Right ventricle myocardium inferior (tissue), 1 donor: ENCODE measurements at regions of chr5 and their contacts with region 1.

Region 1: DNA sequence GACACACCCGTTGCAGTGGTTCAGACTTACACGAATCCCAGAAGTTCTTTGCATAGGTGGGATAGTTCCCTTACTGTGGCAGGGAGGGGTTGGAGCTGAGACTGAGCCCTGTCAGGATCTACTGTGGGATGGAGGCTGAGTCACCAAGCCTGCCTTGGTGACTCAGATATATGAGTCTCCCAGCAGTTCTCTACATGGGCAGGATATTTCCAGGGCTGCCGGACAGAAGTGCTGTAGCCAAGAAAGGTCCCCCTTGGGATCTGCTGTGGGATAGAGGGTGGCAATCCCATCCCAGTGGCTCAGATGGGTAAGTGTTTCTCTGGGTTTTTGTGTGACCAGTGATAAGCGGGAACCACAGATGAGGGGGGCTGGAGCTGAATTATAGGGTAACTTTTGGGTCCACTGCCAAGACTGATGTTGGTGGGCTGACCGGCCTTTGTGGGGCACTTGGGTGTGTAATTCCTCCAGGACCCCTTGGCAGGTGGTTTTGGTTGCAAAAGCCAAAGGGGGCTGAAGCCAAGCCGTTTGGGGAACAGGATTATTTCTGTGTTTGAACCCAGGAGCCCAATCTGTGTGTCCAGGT is 18.7 kb downstream of the XRCC4 start:
- DNase-seq: no peak
- ATAC-seq: no peak

Region 2: GRCh38 chr5:82641331-82642003 is 454.6 kb before region 1 on chr5:
- intact Hi-C with region 1: no loop called
- DNase-seq: no peak
- ATAC-seq: peak; percentile 91

Region 3: GRCh38 chr5:83035373-83036101 is 60.5 kb before region 1 on chr5:
- intact Hi-C with region 1: loop called (anchors 5 kb)
- DNase-seq: peak; percentile 68
- ATAC-seq: peak; percentile 97

Region 4: GRCh38 chr5:83107692-83108420 is 11.8 kb after region 1 on chr5:
- intact Hi-C with region 1: no loop called
- DNase-seq: no peak
- ATAC-seq: no peak